Caco-2 (cell line): ENCODE measurements at regions of chr7 and their contacts with region 1.

Region 1: GRCh38 chr7:125383324-125383723 is 453.7 kb upstream of the POT1 start:
- DNase-seq: no peak
- H3K4me3 ChIP-seq: no peak overlapping the region
- H3K4me3 Mint-ChIP-seq: no peak overlapping the region
- H3K27ac Mint-ChIP-seq: no peak overlapping the region
- H3K4me1 ChIP-seq: no peaks in the 10 kb centered on the region
- H3K4me1 Mint-ChIP-seq: no peaks in the 10 kb centered on the region
- H3K27me3 ChIP-seq: no peaks in the 10 kb centered on the region
- H3K27me3 Mint-ChIP-seq: no peaks in the 10 kb centered on the region
- CTCF ChIP-seq: no peak

Region 2: GRCh38 chr7:125670926-125671572 is 287.7 kb after region 1 on chr7:
- CTCF ChIA-PET with region 1: no interaction called
- POLR2A ChIA-PET with region 1: no interaction called
- intact Hi-C with region 1: loop called (anchors 2 kb)
- DNase-seq: peak in 1 of 2 experiments; percentile 9
- H3K4me3 ChIP-seq: no peak overlapping the region
- H3K4me3 Mint-ChIP-seq: no peak overlapping the region
- H3K27ac Mint-ChIP-seq: no peak overlapping the region
- H3K4me1 ChIP-seq: no peaks in the 10 kb centered on the region
- H3K4me1 Mint-ChIP-seq: no peaks in the 10 kb centered on the region
- H3K27me3 ChIP-seq: no peaks in the 10 kb centered on the region
- H3K27me3 Mint-ChIP-seq: no peaks in the 10 kb centered on the region
- CTCF ChIP-seq: peak; percentile 58 to 61